HepG2 (cell line): ENCODE measurements at regions of chr7 and their contacts with region 1.

Region 1: DNA sequence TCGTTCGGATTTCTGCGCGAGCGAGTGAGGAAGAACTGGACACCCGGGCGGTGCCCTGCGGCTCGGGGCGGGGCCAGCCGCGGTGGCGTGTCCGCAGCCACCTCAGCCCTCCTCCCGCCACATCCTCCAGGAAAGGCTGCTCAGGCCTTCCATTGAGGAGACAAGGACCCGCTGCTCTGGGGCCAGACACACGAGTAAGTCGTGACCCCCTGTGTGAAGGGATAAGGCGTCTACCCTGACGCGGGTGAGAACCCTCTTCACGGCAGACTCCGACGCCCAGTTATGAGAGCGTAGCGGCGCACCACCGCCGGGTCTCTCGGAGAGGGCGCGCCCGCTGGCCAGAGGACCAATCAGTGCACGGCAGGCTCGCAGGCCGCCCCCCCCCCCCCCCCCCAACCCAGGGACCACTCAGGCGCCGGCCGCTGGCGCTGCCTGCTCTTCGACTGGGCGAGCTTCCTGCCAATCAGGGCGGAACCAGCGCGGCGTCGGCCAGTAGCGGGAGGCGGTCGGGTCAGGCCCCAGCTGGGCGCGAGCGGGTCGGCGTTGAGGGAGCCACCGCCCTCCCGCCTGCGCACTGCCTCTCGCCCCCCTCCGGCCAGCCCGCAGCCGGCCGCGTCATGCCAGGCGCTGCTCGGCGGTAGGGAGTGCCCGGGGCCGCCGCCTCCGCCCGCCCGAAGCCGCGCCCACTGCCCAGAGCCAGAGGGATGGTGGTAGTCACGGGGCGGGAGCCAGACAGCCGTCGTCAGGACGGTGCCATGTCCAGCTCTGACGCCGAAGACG is at the start of gene KCTD7:
- DNase-seq: peak; percentile 91
- ATAC-seq: peak; percentile 95
- H3K4me3 ChIP-seq: peak within 1 kb of the TSS; percentile 69 to 95 (median 81)
- H3K27ac ChIP-seq: peak within 1 kb of the TSS; percentile 87
- H3K4me1 ChIP-seq: peaks cover 43% of the 10 kb centered on the region
- H3K27me3 ChIP-seq: no peaks in the 10 kb centered on the region
- CTCF ChIP-seq: peak; percentile 30
- EP300 ChIP-seq: no peak
- POLR2A ChIP-seq: peak; percentile 96 to 99
- RAD21 ChIP-seq: peak; percentile 16; the same call in 1 of the 2 replicates
- total RNA-seq, gene KCTD7: 7.3 and 7.7 TPM in 2 replicates

Region 2: GRCh38 chr7:66265566-66265965 is 363.0 kb before region 1 on chr7:
- CTCF ChIA-PET with region 1: no interaction called
- POLR2A ChIA-PET with region 1: no interaction called
- in situ Hi-C with region 1: no loop called
- intact Hi-C with region 1: no loop called
- DNase-seq: no peak
- ATAC-seq: no peak
- H3K4me3 ChIP-seq: no peak overlapping the region
- H3K27ac ChIP-seq: no peak overlapping the region
- H3K4me1 ChIP-seq: no peaks in the 10 kb centered on the region
- H3K27me3 ChIP-seq: no peaks in the 10 kb centered on the region
- CTCF ChIP-seq: no peak
- EP300 ChIP-seq: no peak
- POLR2A ChIP-seq: no peak
- RAD21 ChIP-seq: no peak

Region 3: GRCh38 chr7:66564045-66564444 is 64.5 kb before region 1 on chr7:
- CTCF ChIA-PET with region 1: no interaction called
- POLR2A ChIA-PET with region 1: no interaction called
- in situ Hi-C with region 1: no loop called
- intact Hi-C with region 1: loop called (anchors 10 kb)
- DNase-seq: no peak
- ATAC-seq: peak; percentile 62; the same call in 2 of the 3 replicates
- H3K4me3 ChIP-seq: no peak overlapping the region
- H3K27ac ChIP-seq: no peak overlapping the region
- H3K4me1 ChIP-seq: peaks cover 19% of the 10 kb centered on the region; the same call in 1 of the 2 replicates
- H3K27me3 ChIP-seq: no peaks in the 10 kb centered on the region
- CTCF ChIP-seq: no peak
- EP300 ChIP-seq: no peak
- POLR2A ChIP-seq: no peak
- RAD21 ChIP-seq: no peak

Region 4: DNA sequence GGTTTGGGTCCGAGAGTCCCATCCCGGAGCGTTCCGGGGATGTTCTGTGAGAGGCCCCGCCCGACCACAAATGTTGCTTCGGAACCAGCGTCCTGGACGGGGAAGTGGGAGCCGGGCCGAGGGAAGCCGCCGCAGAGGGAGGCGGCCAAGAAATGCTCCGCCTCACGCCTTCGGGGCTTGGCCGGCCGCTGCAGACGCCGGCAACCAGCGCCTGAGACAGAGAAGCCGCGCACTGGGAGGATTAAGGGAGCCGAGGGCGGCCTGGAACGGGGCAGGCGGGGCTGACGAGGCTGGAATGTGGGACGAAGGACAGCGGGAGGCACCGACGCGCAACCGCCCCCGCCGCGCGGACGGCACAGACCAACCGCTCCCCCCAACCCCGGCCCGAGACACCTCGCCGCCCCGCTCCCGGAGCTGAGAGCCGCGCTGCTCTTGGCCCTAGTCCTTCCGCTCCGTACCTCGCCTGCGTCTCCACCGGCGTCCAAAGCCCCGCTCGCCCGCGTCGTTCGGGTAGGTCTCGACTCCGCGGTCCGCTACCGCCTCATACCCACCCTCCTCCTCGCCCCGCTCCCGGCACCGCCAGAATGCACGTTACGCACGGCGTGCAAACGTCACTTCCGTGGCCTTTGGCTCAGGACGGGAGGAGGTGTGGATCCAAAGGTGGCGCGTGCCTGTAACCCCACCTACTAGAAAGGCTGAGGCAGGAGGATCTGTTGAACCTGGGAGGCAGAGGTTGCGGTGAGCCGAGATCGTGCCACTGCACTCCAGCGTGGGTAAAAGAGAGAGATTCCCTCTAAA is 36.6 kb before region 1 on chr7:
- CTCF ChIA-PET with region 1: no interaction called
- POLR2A ChIA-PET with region 1: interaction called, 3 read pairs
- in situ Hi-C with region 1: no loop called
- intact Hi-C with region 1: loop called (anchors 5 kb)
- DNase-seq: peak; percentile 91
- ATAC-seq: peak; percentile 97
- H3K4me3 ChIP-seq: peak overlapping the region; percentile 90 to 98 (median 98)
- H3K27ac ChIP-seq: peak overlapping the region; percentile 79
- H3K4me1 ChIP-seq: peaks cover 54% of the 10 kb centered on the region
- H3K27me3 ChIP-seq: no peaks in the 10 kb centered on the region
- CTCF ChIP-seq: peak; percentile 29
- EP300 ChIP-seq: no peak
- POLR2A ChIP-seq: peak; percentile 92 to 94
- RAD21 ChIP-seq: no peak

Region 5: GRCh38 chr7:66654123-66654732 is 25.7 kb after region 1 on chr7:
- CTCF ChIA-PET with region 1: no interaction called
- POLR2A ChIA-PET with region 1: interaction called, 30 read pairs
- in situ Hi-C with region 1: no loop called
- intact Hi-C with region 1: no loop called
- DNase-seq: peak; percentile 99
- ATAC-seq: peak; percentile 94
- H3K4me3 ChIP-seq: peak overlapping the region; percentile 83 to 94 (median 91); a peak in 5 of 6 replicates
- H3K27ac ChIP-seq: peak overlapping the region; percentile 94
- H3K4me1 ChIP-seq: peaks cover 21% of the 10 kb centered on the region
- H3K27me3 ChIP-seq: no peaks in the 10 kb centered on the region
- CTCF ChIP-seq: peak; percentile 67
- EP300 ChIP-seq: peak in 1 of 2 experiments; percentile 39; a peak in 1 of 4 replicates
- POLR2A ChIP-seq: peak; percentile 95 to 98
- RAD21 ChIP-seq: no peak

Region 6: GRCh38 chr7:66681491-66682349 is 53.2 kb after region 1 on chr7:
- CTCF ChIA-PET with region 1: no interaction called
- POLR2A ChIA-PET with region 1: interaction called, 10 read pairs
- in situ Hi-C with region 1: no loop called
- intact Hi-C with region 1: no loop called
- DNase-seq: peak; percentile 92
- ATAC-seq: peak; percentile 96
- H3K4me3 ChIP-seq: peak overlapping the region; percentile 81 to 100 (median 83)
- H3K27ac ChIP-seq: peak overlapping the region; percentile 86
- H3K4me1 ChIP-seq: peaks cover 44% of the 10 kb centered on the region
- H3K27me3 ChIP-seq: no peaks in the 10 kb centered on the region
- CTCF ChIP-seq: 0 out of 2 replicates have a peak, but pooled peaks have one; percentile 5
- EP300 ChIP-seq: no peak
- POLR2A ChIP-seq: peak; percentile 77 to 88
- RAD21 ChIP-seq: no peak